Activated naive CD4-positive, alpha-beta T cell treated with anti-CD3 and anti-CD28 coated beads, Interleukin-2, amount 10 ng/mL, durations not matched to agents 7 days and 5 days (primary cell): ENCODE measurements at regions of chr10 and their contacts with region 1.

Region 1: DNA sequence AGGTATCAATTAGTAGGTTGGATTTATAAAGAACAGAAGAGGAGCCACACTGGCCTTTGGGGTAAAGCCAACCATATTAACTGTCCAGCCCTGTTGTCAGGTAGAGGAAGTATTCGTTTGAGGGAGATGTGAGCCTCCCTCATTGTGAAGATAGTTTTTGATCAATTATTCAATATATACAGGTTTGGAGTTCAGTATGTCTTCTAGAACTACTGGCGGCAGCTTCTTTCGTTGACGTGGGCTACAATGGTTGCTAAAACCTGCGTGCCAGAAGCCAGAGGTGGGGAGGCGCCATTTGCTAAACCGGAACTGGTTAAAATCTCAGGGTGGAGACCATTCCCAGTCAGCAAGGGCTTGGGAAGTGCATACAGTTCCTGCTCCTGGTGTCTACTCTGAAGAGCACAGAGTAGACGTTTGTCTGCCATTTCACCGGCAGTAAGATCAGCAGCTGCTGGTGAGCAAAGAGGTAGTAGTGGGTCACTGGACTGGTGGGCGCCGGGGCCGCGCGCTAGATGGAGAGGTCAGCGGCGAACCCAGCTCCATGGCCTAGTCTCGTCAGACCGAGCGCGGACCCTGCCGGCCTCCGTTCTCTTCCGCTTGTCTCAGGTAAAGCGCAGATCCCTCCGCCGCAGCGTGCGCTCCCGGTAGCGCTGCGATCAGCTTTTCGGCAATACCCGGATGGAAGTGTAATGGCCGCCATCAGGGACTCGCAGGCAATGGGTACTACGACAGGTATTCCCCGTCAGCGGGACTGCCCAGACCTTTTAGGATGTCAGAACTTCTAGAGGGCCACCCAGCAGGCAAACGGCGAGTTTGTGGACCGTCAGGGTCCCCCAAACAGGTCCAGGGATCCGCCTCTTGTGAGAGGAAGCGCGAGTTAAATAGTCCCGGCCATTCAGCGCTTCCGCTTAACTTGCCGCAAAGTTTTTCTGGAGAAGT is at the start of gene ZNF518A:
- DNase-seq: peak; percentile 91
- H3K4me3 Mint-ChIP-seq: peak within 1 kb of the TSS; percentile 85
- H3K27ac Mint-ChIP-seq: peak within 1 kb of the TSS; percentile 99
- H3K4me1 Mint-ChIP-seq: peaks cover 30% of the 10 kb centered on the region
- H3K27me3 Mint-ChIP-seq: peaks cover 46% of the 10 kb centered on the region

Region 2: DNA sequence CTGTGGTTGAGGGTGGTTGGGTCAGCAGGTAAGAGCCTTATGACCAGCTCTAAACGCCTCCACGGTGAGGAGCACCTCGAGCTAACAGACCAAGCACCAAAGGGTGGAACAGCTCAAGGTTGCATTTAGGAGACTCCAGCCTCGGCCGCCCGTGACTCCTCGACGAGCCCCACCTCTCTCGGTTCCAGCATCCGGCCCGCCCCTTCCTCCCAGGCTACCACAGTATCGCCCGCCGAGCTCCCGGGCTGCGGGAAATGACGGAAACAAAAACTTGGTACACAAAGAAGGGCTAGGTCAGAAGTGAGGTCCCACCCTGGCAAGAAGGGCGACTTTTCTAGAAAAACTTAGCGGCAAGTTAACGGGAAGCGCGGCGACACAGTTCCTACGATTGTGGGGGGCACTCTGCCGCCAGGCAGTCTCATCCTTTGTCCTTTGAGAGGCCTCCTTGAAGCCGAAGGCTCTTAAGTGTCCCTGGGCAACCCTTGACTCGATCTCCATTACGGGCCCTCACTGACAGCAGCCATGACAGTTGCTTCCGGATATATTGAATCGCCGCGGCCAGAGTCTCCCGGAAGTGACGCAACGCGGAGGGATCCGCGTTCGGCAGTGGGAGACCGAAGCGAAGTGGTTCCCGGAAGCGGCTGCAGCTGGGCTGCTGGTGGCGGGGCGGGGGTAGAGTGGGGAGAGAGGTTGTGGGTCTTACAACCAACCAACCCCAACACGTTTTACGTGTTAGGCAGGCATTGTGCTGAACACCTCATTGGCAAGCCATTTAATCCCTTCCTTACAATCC is 39.8 kb before region 1 on chr10:
- CTCF ChIA-PET with region 1: interaction called, 12 read pairs
- DNase-seq: peak; percentile 93
- H3K4me3 Mint-ChIP-seq: peak overlapping the region; percentile 92
- H3K27ac Mint-ChIP-seq: peak overlapping the region; percentile 99
- H3K4me1 Mint-ChIP-seq: peaks cover 13% of the 10 kb centered on the region
- H3K27me3 Mint-ChIP-seq: peaks cover 23% of the 10 kb centered on the region

Region 3: GRCh38 chr10:96208271-96208670 is 78.6 kb after region 1 on chr10:
- CTCF ChIA-PET with region 1: no interaction called
- DNase-seq: no peak
- H3K4me3 Mint-ChIP-seq: no peak overlapping the region
- H3K27ac Mint-ChIP-seq: no peak overlapping the region
- H3K4me1 Mint-ChIP-seq: no peaks in the 10 kb centered on the region
- H3K27me3 Mint-ChIP-seq: peaks cover 8% of the 10 kb centered on the region